ENCODE measurements at regions of chr5 and their contacts with region 1.

Region 1: DNA sequence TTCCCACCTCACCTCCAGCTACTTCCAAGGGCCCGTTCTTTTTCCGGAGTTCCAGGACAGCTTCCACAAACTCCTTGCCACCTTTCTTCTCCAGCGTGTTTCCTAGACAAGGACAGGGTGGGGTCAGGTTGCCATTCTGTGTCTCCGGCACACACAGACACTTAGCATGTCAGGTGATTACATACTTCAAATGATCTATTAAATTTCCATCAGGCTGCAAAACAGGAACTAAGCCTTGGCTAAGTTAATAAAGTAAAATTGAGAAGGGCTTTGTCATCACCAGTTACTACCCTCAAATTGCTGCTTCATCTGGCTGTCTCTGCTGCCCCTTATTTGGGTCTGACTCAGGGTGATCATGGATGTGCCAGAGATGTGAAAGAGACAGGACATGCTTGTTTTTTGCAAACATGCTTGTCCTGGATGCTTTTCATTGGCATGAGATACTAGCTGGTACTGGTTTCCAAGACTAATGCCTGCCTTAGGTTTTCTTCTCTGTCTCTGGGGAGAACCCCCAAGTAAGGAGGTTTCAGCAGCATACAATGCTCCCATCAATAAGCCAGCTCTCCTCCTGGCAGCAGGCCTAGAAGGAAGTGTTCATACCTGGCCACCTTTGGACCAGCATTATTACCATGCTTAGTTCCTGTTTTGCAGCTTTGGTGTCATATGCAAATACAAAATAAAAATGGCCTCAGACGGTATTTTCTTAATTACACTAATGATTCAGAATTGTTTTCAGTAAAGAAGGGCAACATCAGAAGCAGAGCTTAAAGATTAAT is 52.9 kb downstream of the MACROH2A1 start:
- DNase-seq: peak; percentile 65
- H3K4me3 Mint-ChIP-seq: no peak overlapping the region
- H3K27ac Mint-ChIP-seq: peak overlapping the region; percentile 82
- H3K4me1 Mint-ChIP-seq: peaks cover 12% of the 10 kb centered on the region
- H3K27me3 Mint-ChIP-seq: no peaks in the 10 kb centered on the region
- CTCF ChIP-seq: no peak

Region 2: GRCh38 chr5:135203593-135204036 is 142.5 kb before region 1 on chr5:
- CTCF ChIA-PET with region 1: no interaction called
- intact Hi-C with region 1: no loop called
- DNase-seq: no peak
- H3K4me3 Mint-ChIP-seq: no peak overlapping the region
- H3K27ac Mint-ChIP-seq: no peak overlapping the region
- H3K4me1 Mint-ChIP-seq: peaks cover 14% of the 10 kb centered on the region
- H3K27me3 Mint-ChIP-seq: peaks cover 35% of the 10 kb centered on the region
- CTCF ChIP-seq: peak; percentile 52

Region 3: GRCh38 chr5:135271533-135272310 is 74.4 kb before region 1 on chr5:
- CTCF ChIA-PET with region 1: no interaction called
- intact Hi-C with region 1: no loop called
- DNase-seq: no peak
- H3K4me3 Mint-ChIP-seq: no peak overlapping the region
- H3K27ac Mint-ChIP-seq: no peak overlapping the region
- H3K4me1 Mint-ChIP-seq: no peaks in the 10 kb centered on the region
- H3K27me3 Mint-ChIP-seq: peaks cover 64% of the 10 kb centered on the region
- CTCF ChIP-seq: no peak

Region 4: GRCh38 chr5:135371622-135372251 is 25.6 kb after region 1 on chr5:
- CTCF ChIA-PET with region 1: no interaction called
- intact Hi-C with region 1: no loop called
- DNase-seq: no peak
- H3K4me3 Mint-ChIP-seq: no peak overlapping the region
- H3K27ac Mint-ChIP-seq: no peak overlapping the region
- H3K4me1 Mint-ChIP-seq: no peaks in the 10 kb centered on the region
- H3K27me3 Mint-ChIP-seq: no peaks in the 10 kb centered on the region
- CTCF ChIP-seq: no peak

Region 5: DNA sequence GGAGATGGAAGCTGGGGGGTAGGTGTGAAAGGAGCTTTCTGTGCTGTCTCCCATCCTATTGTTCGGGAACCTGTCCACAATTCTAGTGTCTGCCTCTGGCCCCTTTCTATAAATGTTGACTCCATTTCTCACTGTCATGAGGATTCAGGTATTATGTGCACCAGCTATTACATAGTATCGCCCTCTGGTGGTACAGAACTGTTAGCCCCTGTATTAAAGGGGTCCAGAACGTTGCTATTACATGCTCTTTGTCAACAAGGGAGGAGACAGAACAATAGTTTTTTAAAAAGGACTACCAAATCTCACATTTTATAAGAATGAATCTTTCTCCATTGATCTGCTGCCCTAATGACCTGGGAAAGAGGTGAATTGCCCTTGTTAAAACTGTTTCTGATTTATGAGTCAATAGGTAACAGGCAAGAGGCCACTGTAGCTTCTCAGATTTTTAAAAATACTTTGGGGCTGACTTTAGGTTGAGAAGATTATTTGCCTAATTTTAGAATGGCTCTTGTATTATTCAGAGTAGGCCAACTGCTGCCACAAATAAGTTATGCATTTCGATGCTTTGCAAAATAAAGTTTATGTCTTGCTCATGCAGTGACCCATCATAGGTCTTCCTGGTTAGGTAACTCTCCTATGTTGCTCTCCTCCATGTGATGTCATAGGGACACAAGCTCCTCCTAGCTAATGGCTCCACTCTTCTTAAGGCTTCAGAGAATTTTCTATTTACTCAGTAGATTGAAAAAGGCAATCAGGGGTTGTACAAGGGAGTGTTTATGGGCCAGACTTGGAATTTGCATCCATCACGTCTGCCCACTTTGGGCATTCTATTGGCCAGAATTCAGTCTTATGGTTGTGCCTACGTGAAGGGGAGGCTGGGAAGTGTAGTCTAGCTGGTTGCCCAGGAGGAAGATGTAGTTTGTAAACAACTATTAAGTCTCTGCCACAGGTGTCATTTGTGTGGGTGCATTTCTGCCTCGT is 80.2 kb after region 1 on chr5:
- CTCF ChIA-PET with region 1: interaction called, 3 read pairs
- intact Hi-C with region 1: loop called (anchors 5 kb)
- DNase-seq: peak; percentile 59
- H3K4me3 Mint-ChIP-seq: no peak overlapping the region
- H3K27ac Mint-ChIP-seq: no peak overlapping the region
- H3K4me1 Mint-ChIP-seq: no peaks in the 10 kb centered on the region
- H3K27me3 Mint-ChIP-seq: peaks cover 25% of the 10 kb centered on the region
- CTCF ChIP-seq: peak; percentile 59

Region 6: DNA sequence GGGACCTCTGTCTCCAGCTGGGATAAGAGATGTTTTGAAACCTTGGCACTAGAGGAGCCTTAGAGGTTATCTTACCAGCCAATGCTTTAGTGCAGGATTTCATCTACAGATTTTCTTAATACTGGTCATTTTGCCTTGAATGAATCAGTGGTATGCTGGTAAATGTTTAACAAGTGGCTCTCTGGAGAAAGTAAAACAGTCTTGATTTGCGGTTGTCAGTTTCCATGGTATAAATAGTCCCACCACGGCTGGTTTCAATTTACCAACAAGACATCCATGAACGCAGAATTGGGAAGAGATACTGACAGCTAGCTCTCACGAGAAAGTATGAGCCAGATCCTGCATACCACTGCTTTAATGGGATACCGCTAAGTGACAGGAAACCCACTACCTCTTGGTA is 289.3 kb after region 1 on chr5:
- CTCF ChIA-PET with region 1: no interaction called
- intact Hi-C with region 1: no loop called
- DNase-seq: no peak
- H3K4me3 Mint-ChIP-seq: no peak overlapping the region
- H3K27ac Mint-ChIP-seq: no peak overlapping the region
- H3K4me1 Mint-ChIP-seq: no peaks in the 10 kb centered on the region
- H3K27me3 Mint-ChIP-seq: peaks cover 54% of the 10 kb centered on the region
- CTCF ChIP-seq: no peak

Measured in Calu3 (cell line).